ENCODE measurements at regions of chr6 and their contacts with region 1.

Region 1: GRCh38 chr6:36765594-36766398 is 68.2 kb downstream of the RAB44 start:
- DNase-seq: peak; percentile 77
- H3K4me3 ChIP-seq: no peak overlapping the region
- H3K27ac ChIP-seq: peak overlapping the region; percentile 6
- H3K4me1 ChIP-seq: peaks cover 51% of the 10 kb centered on the region
- H3K27me3 ChIP-seq: no peaks in the 10 kb centered on the region
- CTCF ChIP-seq: peak; percentile 91

Region 2: DNA sequence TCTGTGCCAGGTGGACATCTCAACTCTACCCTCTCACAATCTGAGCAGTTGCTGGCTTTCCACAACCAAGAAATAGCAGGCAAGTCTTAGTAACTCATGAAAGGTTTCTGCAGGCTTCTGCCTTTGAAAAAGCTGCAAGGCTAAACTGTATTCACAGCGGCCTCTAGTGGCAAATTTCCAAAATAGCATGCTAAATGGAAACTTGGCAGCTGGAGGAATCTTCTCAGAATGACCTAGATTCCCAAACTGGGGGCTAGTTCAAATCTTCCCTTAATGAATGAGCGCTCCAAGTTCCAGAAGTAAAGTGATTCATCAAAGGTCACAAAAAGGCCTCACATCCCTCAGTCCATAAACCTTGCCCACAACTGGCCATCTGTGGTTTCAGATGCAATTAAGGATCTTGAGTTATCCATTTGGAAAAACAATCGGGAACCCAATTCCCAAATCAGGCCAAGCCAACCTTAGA is 85.4 kb after region 1 on chr6:
- intact Hi-C with region 1: loop called (anchors 5 kb)
- DNase-seq: no peak
- H3K4me3 ChIP-seq: no peak overlapping the region
- H3K27ac ChIP-seq: peak overlapping the region; percentile 92
- H3K4me1 ChIP-seq: peaks cover 93% of the 10 kb centered on the region
- H3K27me3 ChIP-seq: no peaks in the 10 kb centered on the region
- CTCF ChIP-seq: peak; percentile 83